Testis (tissue), 5 donors: ENCODE measurements at regions of chr1 and their contacts with region 1.

Region 1: GRCh38 chr1:67771152-67771551 is 62.1 kb downstream of the GNG12 start:
- DNase-seq: no peak
- H3K4me3 ChIP-seq: no peak overlapping the region
- H3K27ac ChIP-seq: no peak overlapping the region
- H3K4me1 ChIP-seq: no peaks in the 10 kb centered on the region
- H3K27me3 ChIP-seq: no peaks in the 10 kb centered on the region
- CTCF ChIP-seq: no peak
- POLR2A ChIP-seq: no peak

Region 2: GRCh38 chr1:67646145-67647035 is 124.8 kb before region 1 on chr1:
- intact Hi-C with region 1: no loop called
- DNase-seq: peak; percentile 66
- H3K4me3 ChIP-seq: no peak overlapping the region
- H3K27ac ChIP-seq: no peak overlapping the region
- H3K4me1 ChIP-seq: peaks cover 17% of the 10 kb centered on the region
- H3K27me3 ChIP-seq: no peaks in the 10 kb centered on the region
- CTCF ChIP-seq: no peak
- POLR2A ChIP-seq: no peak

Region 3: DNA sequence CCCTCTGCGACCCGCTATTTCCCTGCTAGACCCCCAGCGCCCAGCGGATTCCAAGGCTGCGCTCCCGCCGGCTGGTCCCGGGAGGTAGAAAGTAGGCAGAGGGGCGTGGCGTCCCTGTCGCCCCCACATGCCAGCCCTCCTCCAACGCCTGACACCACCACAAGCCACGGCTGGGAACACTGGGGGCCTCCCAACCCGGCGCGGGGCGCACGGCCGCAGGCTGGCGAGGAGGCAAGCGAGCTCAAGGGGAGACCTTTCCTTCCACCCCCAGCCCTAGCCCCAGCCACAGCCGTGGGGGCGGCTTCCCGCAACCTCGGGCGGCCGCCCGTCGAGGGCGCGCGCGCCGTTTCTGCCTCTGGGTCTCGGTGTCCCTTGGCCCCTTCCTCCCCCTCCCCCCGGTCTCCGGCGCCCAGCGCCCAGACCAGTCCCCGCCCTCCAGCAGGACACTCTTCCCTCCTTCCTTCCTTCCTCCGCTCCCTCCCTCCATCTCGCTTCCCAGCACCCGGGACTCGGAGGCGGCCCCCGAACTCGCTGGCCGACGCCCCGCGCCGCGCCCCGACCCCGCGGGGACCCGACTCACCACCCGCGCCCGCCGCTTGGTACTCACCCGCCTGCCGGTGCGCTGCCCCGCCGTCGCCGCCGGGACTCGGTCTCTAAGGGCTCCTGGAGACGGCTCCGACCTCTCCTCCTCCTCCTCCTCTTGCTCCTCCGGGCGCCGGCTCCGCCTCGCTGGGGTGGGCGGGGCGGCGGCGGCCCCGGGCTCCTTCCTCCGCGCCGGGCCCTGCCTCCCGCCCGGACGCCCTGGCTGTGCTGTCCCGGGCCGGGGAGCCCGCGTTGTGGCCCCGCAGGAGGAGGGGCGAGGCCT is 61.8 kb after region 1 on chr1 and contains the start of gene GNG12:
- intact Hi-C with region 1: loop called (anchors 10 kb)
- DNase-seq: peak; percentile 82
- H3K4me3 ChIP-seq: peak within 1 kb of the TSS; percentile 82 to 85
- H3K27ac ChIP-seq: peak within 1 kb of the TSS; percentile 85 to 94
- H3K4me1 ChIP-seq: peaks cover 14% of the 10 kb centered on the region
- H3K27me3 ChIP-seq: no peaks in the 10 kb centered on the region
- CTCF ChIP-seq: no peak
- POLR2A ChIP-seq: no peak
- total RNA-seq, gene GNG12: 28.1 to 46.0 TPM